HepG2 (cell line): ENCODE measurements at regions of chr1 and their contacts with region 1.

Region 1: GRCh38 chr1:208238710-208239472 is 5.3 kb downstream of the PLXNA2 start:
- DNase-seq: no peak
- ATAC-seq: peak; percentile 34
- H3K4me3 ChIP-seq: peak overlapping the region in 1 of 3 experiments; percentile 45; a peak in 1 of 6 replicates
- H3K27ac ChIP-seq: no peak overlapping the region
- H3K4me1 ChIP-seq: peaks cover 93% of the 10 kb centered on the region
- H3K27me3 ChIP-seq: peaks cover 0 to 18% of the 10 kb centered on the region in 2 experiments; a peak in 2 of 5 replicates
- CTCF ChIP-seq: peak; percentile 48
- EP300 ChIP-seq: no peak
- POLR2A ChIP-seq: no peak
- RAD21 ChIP-seq: no peak

Region 2: GRCh38 chr1:208115924-208116640 is 122.8 kb before region 1 on chr1:
- CTCF ChIA-PET with region 1: no interaction called
- POLR2A ChIA-PET with region 1: interaction called, 3 read pairs
- in situ Hi-C with region 1: no loop called
- intact Hi-C with region 1: loop called (anchors 5 kb)
- DNase-seq: peak; percentile 37
- ATAC-seq: no peak
- H3K4me3 ChIP-seq: no peak overlapping the region
- H3K27ac ChIP-seq: no peak overlapping the region
- H3K4me1 ChIP-seq: peaks cover 61% of the 10 kb centered on the region
- H3K27me3 ChIP-seq: no peaks in the 10 kb centered on the region
- CTCF ChIP-seq: no peak
- EP300 ChIP-seq: no peak
- POLR2A ChIP-seq: no peak
- RAD21 ChIP-seq: no peak

Region 3: GRCh38 chr1:208184088-208184911 is 54.6 kb before region 1 on chr1:
- CTCF ChIA-PET with region 1: no interaction called
- POLR2A ChIA-PET with region 1: no interaction called
- in situ Hi-C with region 1: no loop called
- intact Hi-C with region 1: no loop called
- DNase-seq: peak; percentile 42
- ATAC-seq: no peak
- H3K4me3 ChIP-seq: no peak overlapping the region
- H3K27ac ChIP-seq: no peak overlapping the region
- H3K4me1 ChIP-seq: peaks cover 53% of the 10 kb centered on the region
- H3K27me3 ChIP-seq: no peaks in the 10 kb centered on the region
- CTCF ChIP-seq: no peak
- EP300 ChIP-seq: no peak
- POLR2A ChIP-seq: no peak
- RAD21 ChIP-seq: no peak

Region 4: GRCh38 chr1:208207388-208208131 is 31.3 kb before region 1 on chr1:
- CTCF ChIA-PET with region 1: no interaction called
- POLR2A ChIA-PET with region 1: interaction called, 7 read pairs
- in situ Hi-C with region 1: no loop called
- intact Hi-C with region 1: loop called (anchors 2 kb)
- DNase-seq: peak; percentile 84
- ATAC-seq: peak; percentile 67
- H3K4me3 ChIP-seq: no peak overlapping the region
- H3K27ac ChIP-seq: peak overlapping the region; percentile 47
- H3K4me1 ChIP-seq: peaks cover 41% of the 10 kb centered on the region
- H3K27me3 ChIP-seq: no peaks in the 10 kb centered on the region
- CTCF ChIP-seq: no peak; the same call in 1 of the 2 replicates
- EP300 ChIP-seq: no peak
- POLR2A ChIP-seq: no peak
- RAD21 ChIP-seq: no peak

Region 5: GRCh38 chr1:208279826-208280588 is 41.1 kb after region 1 on chr1:
- CTCF ChIA-PET with region 1: no interaction called
- POLR2A ChIA-PET with region 1: no interaction called
- in situ Hi-C with region 1: no loop called
- intact Hi-C with region 1: no loop called
- DNase-seq: no peak
- ATAC-seq: no peak
- H3K4me3 ChIP-seq: no peak overlapping the region
- H3K27ac ChIP-seq: no peak overlapping the region
- H3K4me1 ChIP-seq: no peaks in the 10 kb centered on the region
- H3K27me3 ChIP-seq: peaks cover 2 to 6% of the 10 kb centered on the region in 2 experiments; a peak in 3 of 5 replicates
- CTCF ChIP-seq: no peak
- EP300 ChIP-seq: no peak
- POLR2A ChIP-seq: no peak
- RAD21 ChIP-seq: no peak